ENCODE measurements at regions of chr13 and their contacts with region 1.

Region 1: GRCh38 chr13:60617991-60618733 is 221.1 kb downstream of the TDRD3 start:
- DNase-seq: peak; percentile 38
- ATAC-seq: peak; percentile 94
- H3K4me3 Mint-ChIP-seq: no peak overlapping the region
- H3K27ac Mint-ChIP-seq: peak overlapping the region; percentile 40; the same call in 1 of the 2 replicates
- H3K4me1 Mint-ChIP-seq: peaks cover 26% of the 10 kb centered on the region
- H3K27me3 Mint-ChIP-seq: no peaks in the 10 kb centered on the region
- CTCF ChIP-seq: no peak

Region 2: DNA sequence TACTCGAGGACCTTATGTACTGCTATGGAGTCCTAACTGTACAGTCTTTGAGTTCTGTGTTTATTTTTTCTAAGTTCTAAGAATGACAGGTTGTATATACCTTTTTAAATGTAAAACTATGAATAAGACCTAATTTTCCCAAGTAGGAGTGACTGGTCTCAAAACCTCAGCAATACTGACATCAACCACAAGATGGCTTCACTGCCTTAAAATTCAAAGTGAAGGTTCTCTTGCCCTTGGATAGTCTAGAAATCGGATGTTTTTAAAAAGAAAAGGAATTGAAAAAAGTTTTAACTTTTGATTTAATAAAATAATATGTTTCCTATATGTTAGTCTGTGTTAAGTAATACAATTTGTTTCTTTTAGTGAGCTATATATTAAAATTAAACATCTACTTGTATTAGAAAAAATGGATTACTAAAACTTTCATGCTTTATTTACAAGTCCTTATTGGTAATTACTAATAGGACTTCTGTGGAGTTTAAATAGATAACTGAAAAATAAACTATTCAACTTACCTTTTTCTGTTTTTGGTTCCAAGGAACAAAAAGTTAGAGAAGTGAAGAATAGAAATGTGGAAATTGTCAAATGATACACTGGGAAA is 169.2 kb before region 1 on chr13:
- CTCF ChIA-PET with region 1: interaction called, 11 read pairs
- POLR2A ChIA-PET with region 1: no interaction called
- DNase-seq: no peak
- ATAC-seq: peak; percentile 55
- H3K4me3 Mint-ChIP-seq: no peak overlapping the region
- H3K27ac Mint-ChIP-seq: no peak overlapping the region
- H3K4me1 Mint-ChIP-seq: peaks cover 9% of the 10 kb centered on the region
- H3K27me3 Mint-ChIP-seq: no peaks in the 10 kb centered on the region
- CTCF ChIP-seq: peak; percentile 61; the same call in 1 of the 2 replicates

Region 3: GRCh38 chr13:60463787-60464186 is 154.4 kb before region 1 on chr13:
- CTCF ChIA-PET with region 1: interaction called, 10 read pairs
- POLR2A ChIA-PET with region 1: no interaction called
- DNase-seq: no peak
- ATAC-seq: no peak
- H3K4me3 Mint-ChIP-seq: no peak overlapping the region
- H3K27ac Mint-ChIP-seq: no peak overlapping the region
- H3K4me1 Mint-ChIP-seq: peaks cover 11% of the 10 kb centered on the region
- H3K27me3 Mint-ChIP-seq: no peaks in the 10 kb centered on the region
- CTCF ChIP-seq: no peak